AG04449 (cell line): ENCODE measurements at regions of chr1 and their contacts with region 1.

Region 1: DNA sequence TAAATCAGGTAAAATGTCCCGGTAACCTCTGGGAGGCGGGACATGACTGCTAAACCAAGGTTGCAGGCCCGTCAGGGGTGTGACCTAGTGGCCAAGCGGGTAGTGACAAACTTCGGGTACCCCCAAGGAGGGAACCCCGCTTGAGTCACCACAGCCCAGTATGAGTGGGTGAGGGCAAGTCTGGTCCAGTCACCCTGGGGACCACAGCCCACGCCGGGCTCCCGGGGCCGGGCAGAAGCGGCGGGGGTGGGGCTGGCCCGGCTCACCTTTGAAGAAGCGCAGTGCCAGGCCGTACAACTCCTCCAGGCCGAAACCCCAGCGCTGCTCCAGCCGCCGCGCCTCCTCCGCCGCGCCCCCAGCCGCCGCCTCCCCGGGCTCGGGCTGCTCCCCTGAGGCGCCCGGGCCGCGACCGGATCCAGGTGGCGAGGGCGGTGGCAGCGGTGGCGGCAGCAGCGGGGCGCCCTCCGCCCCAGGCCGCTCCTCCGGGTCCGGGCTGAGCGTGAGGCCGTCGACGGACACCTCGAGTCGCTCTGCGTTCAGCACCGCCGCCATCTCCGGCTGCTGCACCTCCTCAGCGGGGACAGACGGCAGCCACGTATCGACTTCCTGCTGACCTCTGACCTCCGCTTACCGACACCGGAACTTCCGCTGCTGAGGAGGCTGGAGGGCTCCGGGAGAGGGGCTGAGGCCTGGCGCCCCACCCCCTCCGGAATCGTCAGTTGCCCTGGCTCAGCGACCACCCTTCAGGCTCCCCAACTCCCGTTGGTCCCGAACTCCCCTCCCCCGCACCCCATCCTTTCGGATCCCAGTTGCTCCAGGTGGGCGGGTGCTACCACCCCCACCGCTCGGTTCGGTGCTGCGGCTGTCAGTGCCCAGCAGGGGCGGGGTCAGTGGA is at the start of gene ACBD3:
- DNase-seq: peak; percentile 26
- H3K4me3 ChIP-seq: peak within 1 kb of the TSS; percentile 97
- CTCF ChIP-seq: peak; percentile 19

Region 2: GRCh38 chr1:226157761-226158316 is 28.5 kb before region 1 on chr1:
- CTCF ChIA-PET with region 1: interaction called, 13 read pairs
- POLR2A ChIA-PET with region 1: no interaction called
- DNase-seq: no peak
- H3K4me3 ChIP-seq: no peak overlapping the region
- CTCF ChIP-seq: no peak

Region 3: GRCh38 chr1:226201029-226201593 is 14.7 kb after region 1 on chr1:
- CTCF ChIA-PET with region 1: interaction called, 62 read pairs
- POLR2A ChIA-PET with region 1: interaction called, 3 read pairs
- DNase-seq: no peak
- H3K4me3 ChIP-seq: no peak overlapping the region
- CTCF ChIP-seq: peak; percentile 26